Pancreas (tissue), 10 donors: ENCODE measurements at regions of chr12 and their contacts with region 1.

Region 1: DNA sequence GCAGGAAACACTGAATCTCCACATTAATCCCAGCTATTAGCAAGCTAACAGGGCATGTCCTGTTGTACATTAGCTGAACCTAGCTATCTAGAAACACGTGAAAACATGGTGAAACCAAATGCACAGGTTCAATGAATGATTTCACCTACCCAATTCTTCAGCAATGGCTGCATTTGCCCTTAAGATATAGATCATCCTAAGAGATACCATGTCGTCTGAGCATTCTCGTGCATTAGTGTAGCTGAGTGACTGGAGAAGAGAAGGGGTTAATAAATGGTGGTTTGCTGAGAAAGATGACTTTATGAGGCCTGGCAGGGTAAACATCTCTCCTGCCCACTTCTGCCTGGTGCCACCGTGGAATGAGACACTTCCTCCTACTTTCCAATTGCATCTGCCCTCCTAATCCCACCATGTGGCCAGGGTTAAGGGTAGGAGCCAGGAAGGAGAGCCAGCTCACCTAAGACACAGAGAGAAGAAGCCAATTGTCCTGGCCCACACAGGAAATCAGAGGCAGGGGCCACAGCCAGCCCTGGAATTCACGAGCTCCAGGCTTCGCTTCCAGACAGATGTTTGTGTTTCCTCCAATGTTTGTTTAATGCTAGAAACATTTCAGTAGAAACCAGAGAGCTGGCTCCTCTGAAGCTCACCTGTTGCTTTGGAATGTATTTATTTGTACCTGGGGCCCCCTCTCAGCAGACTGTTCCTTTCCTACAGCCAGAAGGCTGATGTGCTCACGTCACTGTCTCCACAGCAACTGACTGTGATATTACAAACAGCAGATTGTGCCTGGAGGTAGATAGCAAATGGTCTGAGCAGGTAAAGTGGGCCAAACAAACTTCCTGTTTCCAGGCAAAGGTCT is 126.0 kb upstream of the PARP11 start:
- DNase-seq: peak in 4 of 6 donors; percentile 79 to 92 (median 88)
- ATAC-seq: peak; percentile 89 to 94 (median 94)
- H3K4me3 ChIP-seq: peak overlapping the region in 1 of 4 donors; percentile 1
- H3K27ac ChIP-seq: peak overlapping the region; percentile 79 to 90 (median 86)
- H3K4me1 ChIP-seq: peaks cover 6 to 35% (median 25%) of the 10 kb centered on the region in 3 donors
- H3K27me3 ChIP-seq: no peaks in the 10 kb centered on the region
- CTCF ChIP-seq: no peak

Region 2: DNA sequence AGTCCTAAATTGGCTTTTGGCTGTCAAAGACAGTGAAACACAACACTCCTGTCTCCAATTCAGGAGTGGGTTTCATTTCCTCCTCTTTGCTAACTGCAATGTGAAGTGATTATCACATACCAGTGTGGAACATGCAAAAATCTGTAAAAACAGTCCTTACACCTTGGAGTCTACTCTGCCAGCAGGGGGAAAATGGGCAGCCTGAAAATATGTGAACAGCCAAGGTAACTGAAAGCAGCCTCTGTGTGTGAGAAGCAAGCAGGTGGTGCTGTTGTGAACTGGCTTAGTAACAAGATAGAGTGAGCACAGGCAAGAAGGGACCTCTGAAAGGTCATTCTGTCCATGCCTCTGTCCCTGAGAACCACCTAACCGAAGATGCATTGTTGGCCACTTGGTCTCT is 502.2 kb before region 1 on chr12:
- intact Hi-C with region 1: no loop called
- DNase-seq: peak in 4 of 6 donors; percentile 37 to 70 (median 58)
- ATAC-seq: peak; percentile 79 to 85 (median 82)
- H3K4me3 ChIP-seq: no peak overlapping the region
- H3K27ac ChIP-seq: no peak overlapping the region
- H3K4me1 ChIP-seq: peaks cover 0 to 10% (median 10%) of the 10 kb centered on the region in 3 donors
- H3K27me3 ChIP-seq: peaks cover 0 to 14% (median 4%) of the 10 kb centered on the region in 4 donors
- CTCF ChIP-seq: peak in 3 of 4 donors; percentile 11 to 23 (median 18)

Region 3: GRCh38 chr12:4276524-4277204 is 277.5 kb after region 1 on chr12:
- intact Hi-C with region 1: loop called in 1 of 3 experiments (anchors 10 kb)
- DNase-seq: peak; percentile 78 to 92 (median 85)
- ATAC-seq: peak; percentile 58 to 70 (median 66)
- H3K4me3 ChIP-seq: peak overlapping the region in 2 of 4 donors; percentile 66 to 81
- H3K27ac ChIP-seq: no peak overlapping the region
- H3K4me1 ChIP-seq: peaks cover 14 to 25% (median 16%) of the 10 kb centered on the region in 3 donors
- H3K27me3 ChIP-seq: no peaks in the 10 kb centered on the region
- CTCF ChIP-seq: peak; percentile 82 to 88 (median 85)